ENCODE measurements at regions of chr2 and their contacts with region 1.

Region 1: DNA sequence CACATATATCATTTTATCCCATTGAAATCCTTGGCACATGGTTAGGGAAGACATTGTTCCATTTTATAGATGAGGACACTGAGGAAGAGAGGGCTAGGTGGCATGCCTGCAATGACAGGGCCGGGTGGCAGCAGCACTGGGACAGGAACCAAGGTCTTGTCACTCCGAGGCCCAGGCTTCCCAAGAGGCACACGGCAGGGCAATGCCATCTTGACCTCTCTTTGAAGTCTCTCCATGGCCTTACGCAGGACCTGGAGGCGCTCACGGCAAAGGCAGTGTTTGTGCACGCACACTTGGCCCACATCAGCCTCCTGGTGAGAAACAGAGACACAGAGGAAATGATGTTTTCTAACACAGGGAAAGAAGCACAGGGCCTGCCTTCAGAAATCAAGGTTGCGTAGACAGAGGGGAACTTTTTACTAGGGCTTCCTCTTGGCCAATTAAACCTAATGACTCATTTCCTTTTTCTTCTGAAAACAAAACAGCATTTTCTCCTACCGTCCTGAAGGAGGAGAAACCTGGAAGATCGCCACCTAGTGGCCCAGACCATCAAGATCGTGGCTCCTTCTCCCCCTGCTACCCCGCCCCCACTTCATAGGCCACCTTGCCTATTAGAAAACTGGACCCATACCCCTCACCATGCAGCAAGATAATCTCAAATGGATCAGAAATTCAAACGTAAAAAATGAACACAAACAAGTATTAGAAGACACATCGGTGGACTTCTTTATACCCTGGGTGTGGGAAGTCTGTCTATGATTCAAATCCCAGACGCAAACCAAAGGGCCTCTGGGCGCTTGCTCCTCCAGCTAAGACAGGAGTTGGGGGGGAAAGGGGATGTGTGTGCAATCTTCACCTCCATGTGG is 74.6 kb upstream of the SP3 start:
- DNase-seq: peak; percentile 94
- ATAC-seq: peak; percentile 88
- H3K4me3 ChIP-seq: peak overlapping the region; percentile 8 to 27; a peak in 3 of 4 replicates
- H3K27ac ChIP-seq: peak overlapping the region; percentile 94
- H3K4me1 ChIP-seq: peaks cover 23 to 42% of the 10 kb centered on the region in 2 experiments
- H3K27me3 ChIP-seq: no peaks in the 10 kb centered on the region
- CTCF ChIP-seq: peak; percentile 81 to 83 (median 82)
- POLR2A ChIP-seq: peak; percentile 38
- RAD21 ChIP-seq: peak; percentile 79

Region 2: GRCh38 chr2:173884025-173884802 is 155.6 kb before region 1 on chr2:
- CTCF ChIA-PET with region 1: no interaction called
- POLR2A ChIA-PET with region 1: no interaction called
- RAD21 ChIA-PET with region 1: no interaction called
- intact Hi-C with region 1: loop called (anchors 5 kb)
- DNase-seq: peak; percentile 47
- ATAC-seq: peak; percentile 93
- H3K4me3 ChIP-seq: no peak overlapping the region
- H3K27ac ChIP-seq: no peak overlapping the region
- H3K4me1 ChIP-seq: no peaks in the 10 kb centered on the region
- H3K27me3 ChIP-seq: no peaks in the 10 kb centered on the region
- CTCF ChIP-seq: peak; percentile 69 to 86 (median 85); a peak in 5 of 6 replicates
- POLR2A ChIP-seq: no peak
- RAD21 ChIP-seq: peak; percentile 72

Region 3: DNA sequence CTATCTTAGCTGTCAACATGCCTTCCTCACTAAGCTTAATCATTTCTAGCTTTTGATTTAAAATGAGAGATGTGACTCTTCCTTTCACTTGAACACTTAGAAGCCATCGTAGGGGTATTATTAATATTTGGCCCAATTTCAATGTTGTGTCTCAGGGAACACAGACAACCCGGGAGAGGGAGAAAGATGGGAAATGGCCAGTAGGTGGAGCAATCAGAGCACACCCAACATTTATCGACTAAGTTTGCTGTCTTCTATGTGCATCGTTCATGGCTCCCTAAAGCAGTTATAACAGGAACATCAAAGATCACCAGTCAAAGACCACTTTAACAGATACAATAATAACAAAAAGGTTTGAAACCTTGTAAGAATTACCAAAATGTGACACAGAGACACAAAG is 98.4 kb after region 1 on chr2:
- CTCF ChIA-PET with region 1: no interaction called
- POLR2A ChIA-PET with region 1: no interaction called
- RAD21 ChIA-PET with region 1: no interaction called
- intact Hi-C with region 1: no loop called
- DNase-seq: no peak
- ATAC-seq: peak; percentile 63; the same call in 1 of the 2 replicates
- H3K4me3 ChIP-seq: no peak overlapping the region
- H3K27ac ChIP-seq: no peak overlapping the region
- H3K4me1 ChIP-seq: no peaks in the 10 kb centered on the region
- H3K27me3 ChIP-seq: no peaks in the 10 kb centered on the region
- CTCF ChIP-seq: peak in 2 of 3 experiments; percentile 44 to 50; a peak in 4 of 6 replicates
- POLR2A ChIP-seq: no peak
- RAD21 ChIP-seq: no peak

Region 4: DNA sequence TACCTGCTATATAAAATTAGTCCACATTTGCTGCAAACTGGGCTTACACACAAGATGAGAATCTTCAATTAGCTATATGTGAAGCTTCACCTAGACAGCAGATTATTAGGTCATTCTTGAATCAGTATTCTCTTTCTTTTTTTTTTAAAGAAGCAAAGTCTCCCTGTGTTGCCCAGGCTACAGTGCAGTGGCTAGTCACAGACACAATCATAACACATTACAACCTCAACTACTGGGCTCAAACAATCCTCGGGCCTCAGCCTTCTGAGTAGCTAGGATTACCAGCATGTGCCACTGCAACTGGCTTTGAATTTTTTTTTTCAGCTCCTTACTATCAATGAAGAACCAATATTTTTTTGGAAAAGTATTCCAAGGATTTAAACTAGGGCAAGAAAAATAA is 178.1 kb after region 1 on chr2:
- CTCF ChIA-PET with region 1: no interaction called
- POLR2A ChIA-PET with region 1: no interaction called
- RAD21 ChIA-PET with region 1: no interaction called
- intact Hi-C with region 1: no loop called
- DNase-seq: no peak
- ATAC-seq: no peak
- H3K4me3 ChIP-seq: no peak overlapping the region
- H3K27ac ChIP-seq: no peak overlapping the region
- H3K4me1 ChIP-seq: no peaks in the 10 kb centered on the region
- H3K27me3 ChIP-seq: no peaks in the 10 kb centered on the region
- CTCF ChIP-seq: no peak
- POLR2A ChIP-seq: no peak
- RAD21 ChIP-seq: no peak

Measured in HCT116 (cell line).